ENCODE measurements at regions of chr2 and their contacts with region 1.

Region 1: GRCh38 chr2:191748059-191748461 is 70.1 kb downstream of the NABP1 start:
- DNase-seq: no peak
- H3K4me3 Mint-ChIP-seq: no peak overlapping the region
- H3K27ac Mint-ChIP-seq: no peak overlapping the region
- H3K4me1 Mint-ChIP-seq: peaks cover 16% of the 10 kb centered on the region
- H3K27me3 Mint-ChIP-seq: peaks cover 25% of the 10 kb centered on the region

Region 2: DNA sequence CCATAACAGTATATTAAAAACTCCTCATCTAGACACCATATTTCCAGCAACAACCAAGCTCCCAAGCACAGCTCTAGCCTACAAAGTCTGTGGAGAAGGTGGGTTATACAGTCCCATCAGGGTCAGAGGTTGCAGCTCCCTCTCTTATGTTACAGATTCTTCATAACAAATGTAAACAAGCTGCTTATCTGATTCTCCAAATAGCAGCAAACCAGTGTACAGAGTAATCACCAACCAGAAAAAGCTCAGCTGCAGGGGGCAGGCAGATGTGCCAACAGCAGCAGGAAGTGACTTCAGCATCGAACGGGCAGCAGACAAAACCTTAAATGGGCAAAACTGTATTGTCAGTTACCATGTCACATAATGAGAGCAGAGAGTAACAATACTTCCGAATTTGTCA is 123.0 kb before region 1 on chr2:
- intact Hi-C with region 1: no loop called
- DNase-seq: peak; percentile 34
- H3K4me3 Mint-ChIP-seq: peak overlapping the region; percentile 19
- H3K27ac Mint-ChIP-seq: peak overlapping the region; percentile 42
- H3K4me1 Mint-ChIP-seq: peaks cover 64% of the 10 kb centered on the region
- H3K27me3 Mint-ChIP-seq: no peaks in the 10 kb centered on the region

Region 3: GRCh38 chr2:191691016-191691735 is 56.9 kb before region 1 on chr2:
- intact Hi-C with region 1: loop called (anchors 5 kb)
- DNase-seq: peak; percentile 31
- H3K4me3 Mint-ChIP-seq: no peak overlapping the region
- H3K27ac Mint-ChIP-seq: peak overlapping the region; percentile 67
- H3K4me1 Mint-ChIP-seq: peaks cover 60% of the 10 kb centered on the region
- H3K27me3 Mint-ChIP-seq: no peaks in the 10 kb centered on the region